ENCODE measurements at regions of chr10 and their contacts with region 1.

Region 1: DNA sequence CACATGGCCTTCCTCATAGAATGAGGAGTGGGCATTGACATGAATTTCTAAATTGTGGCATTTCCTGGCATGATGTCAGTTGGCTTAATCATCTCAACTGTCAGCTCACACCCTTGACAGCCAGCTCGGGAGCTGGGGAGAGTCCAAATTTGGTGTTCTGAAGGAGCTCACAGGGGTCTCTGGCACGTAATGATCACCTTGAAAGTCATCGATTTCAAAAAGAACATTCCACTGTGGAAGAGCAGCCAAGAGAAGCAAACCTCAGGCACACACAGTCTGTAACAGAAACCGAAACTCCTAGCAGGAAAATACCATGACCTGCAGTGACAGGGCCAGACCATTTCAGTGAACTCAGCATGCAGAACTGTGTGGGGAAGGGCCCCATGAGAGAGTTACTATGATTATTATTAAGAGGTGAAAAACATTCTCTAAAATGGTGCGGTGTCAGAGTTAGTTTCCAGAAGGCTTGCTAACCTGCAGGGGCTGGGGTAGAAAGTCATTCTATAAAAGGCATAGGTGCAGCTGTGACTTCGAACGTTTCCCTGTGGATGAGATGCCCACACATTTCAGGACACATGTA is 26.4 kb upstream of the KLF6 start:
- DNase-seq: peak; percentile 82
- H3K4me3 Mint-ChIP-seq: peak overlapping the region; percentile 59
- H3K27ac Mint-ChIP-seq: no peak overlapping the region
- H3K4me1 Mint-ChIP-seq: peaks cover 86% of the 10 kb centered on the region
- H3K27me3 Mint-ChIP-seq: no peaks in the 10 kb centered on the region

Region 2: DNA sequence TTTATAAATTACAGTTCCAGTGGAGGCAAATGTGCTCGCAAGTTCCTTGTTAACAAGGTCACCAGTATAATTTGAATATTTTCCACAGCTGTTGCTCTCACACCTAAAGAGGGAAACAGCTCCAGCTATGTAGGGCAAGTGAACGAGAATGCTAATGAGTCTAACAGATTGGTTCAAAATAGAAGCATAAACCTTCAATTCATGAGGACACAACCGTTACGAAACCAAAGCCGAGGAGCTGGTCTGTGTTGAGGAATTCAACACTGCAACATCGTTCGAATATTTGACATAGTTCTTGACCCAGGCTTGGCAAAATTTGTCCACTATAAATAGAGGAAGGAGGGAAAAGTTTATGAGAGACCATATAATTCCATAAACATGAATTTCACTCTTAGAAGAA is 187.6 kb before region 1 on chr10:
- CTCF ChIA-PET with region 1: no interaction called
- POLR2A ChIA-PET with region 1: no interaction called
- intact Hi-C with region 1: loop called (anchors 1 kb)
- DNase-seq: no peak
- H3K4me3 Mint-ChIP-seq: no peak overlapping the region
- H3K27ac Mint-ChIP-seq: peak overlapping the region; percentile 83
- H3K4me1 Mint-ChIP-seq: peaks cover 28% of the 10 kb centered on the region
- H3K27me3 Mint-ChIP-seq: no peaks in the 10 kb centered on the region

Region 3: DNA sequence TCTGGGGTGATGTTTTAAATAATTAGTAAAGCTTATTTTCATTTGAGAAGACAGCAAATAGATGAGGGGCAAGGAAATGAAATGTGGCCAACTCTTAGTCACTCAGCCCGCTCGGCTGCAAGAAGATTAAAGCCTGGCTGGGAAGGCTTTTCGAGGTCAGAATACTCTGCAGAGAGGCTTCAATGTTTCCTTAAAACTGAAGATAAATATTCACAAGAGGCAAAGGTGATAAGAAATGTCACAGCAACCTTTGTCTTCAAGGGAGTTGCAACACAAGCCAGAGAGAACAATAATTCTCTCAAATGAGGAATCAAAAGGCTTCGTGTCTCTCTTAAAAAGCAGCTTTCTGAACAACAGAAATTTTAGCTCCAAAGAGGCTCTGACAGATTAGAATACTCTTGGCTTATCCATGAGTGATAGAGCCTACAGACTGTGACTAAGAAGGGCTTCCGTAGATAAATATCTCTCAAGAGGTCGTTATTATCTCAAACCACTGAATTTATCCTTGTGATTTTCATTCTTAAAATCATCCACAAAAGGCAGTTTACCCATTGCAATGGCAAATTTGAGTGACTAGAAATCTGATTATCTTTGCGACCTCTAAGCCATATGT is 118.9 kb before region 1 on chr10:
- CTCF ChIA-PET with region 1: no interaction called
- POLR2A ChIA-PET with region 1: no interaction called
- intact Hi-C with region 1: no loop called
- DNase-seq: no peak
- H3K4me3 Mint-ChIP-seq: no peak overlapping the region
- H3K27ac Mint-ChIP-seq: no peak overlapping the region
- H3K4me1 Mint-ChIP-seq: peaks cover 16% of the 10 kb centered on the region
- H3K27me3 Mint-ChIP-seq: no peaks in the 10 kb centered on the region

Region 4: DNA sequence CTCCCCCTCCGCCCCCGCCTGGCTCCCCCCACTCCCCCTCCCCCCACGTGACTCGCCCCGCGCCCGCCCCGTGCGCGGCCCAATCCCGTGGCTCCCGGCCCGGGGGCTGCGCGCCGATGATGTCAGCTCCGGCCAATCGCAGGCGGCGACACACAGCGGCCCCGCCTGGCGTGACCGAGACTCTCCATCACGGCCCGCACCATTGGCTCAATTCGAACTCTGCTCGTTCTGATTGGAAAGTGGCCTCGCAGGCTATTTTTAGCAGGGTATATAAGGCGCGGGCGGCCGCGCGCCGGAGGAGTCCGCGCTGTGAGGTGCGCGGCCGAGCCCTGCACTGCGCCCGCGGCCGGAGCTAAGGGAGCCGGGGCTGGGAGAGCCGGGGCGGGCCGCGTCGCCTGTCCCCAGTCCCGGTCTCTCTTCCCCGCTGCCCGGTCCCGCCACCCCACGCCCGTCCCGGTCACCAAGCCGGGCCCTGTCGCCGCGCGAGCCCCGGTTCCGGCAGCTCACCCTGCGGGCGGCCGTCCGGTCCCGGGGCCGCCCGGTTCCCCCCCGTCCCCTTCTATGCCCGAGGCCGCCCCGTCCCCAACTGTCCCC is 26.0 kb before region 1 on chr10:
- CTCF ChIA-PET with region 1: interaction called, 5 read pairs
- POLR2A ChIA-PET with region 1: interaction called, 405 read pairs
- intact Hi-C with region 1: loop called (anchors 1 kb)
- DNase-seq: peak; percentile 100
- H3K4me3 Mint-ChIP-seq: peak overlapping the region; percentile 96
- H3K27ac Mint-ChIP-seq: peak overlapping the region; percentile 98
- H3K4me1 Mint-ChIP-seq: peaks cover 27% of the 10 kb centered on the region
- H3K27me3 Mint-ChIP-seq: peaks cover 2% of the 10 kb centered on the region

Region 5: GRCh38 chr10:3852147-3852904 is 40.9 kb after region 1 on chr10:
- CTCF ChIA-PET with region 1: interaction called, 8 read pairs
- POLR2A ChIA-PET with region 1: interaction called, 89 read pairs
- intact Hi-C with region 1: loop called (anchors 1 kb)
- DNase-seq: peak; percentile 86
- H3K4me3 Mint-ChIP-seq: peak overlapping the region; percentile 36
- H3K27ac Mint-ChIP-seq: peak overlapping the region; percentile 92
- H3K4me1 Mint-ChIP-seq: peaks cover 53% of the 10 kb centered on the region
- H3K27me3 Mint-ChIP-seq: no peaks in the 10 kb centered on the region

Region 6: GRCh38 chr10:3902054-3902808 is 90.8 kb after region 1 on chr10:
- CTCF ChIA-PET with region 1: interaction called, 4 read pairs
- POLR2A ChIA-PET with region 1: no interaction called
- intact Hi-C with region 1: loop called (anchors 1 kb)
- DNase-seq: peak; percentile 69
- H3K4me3 Mint-ChIP-seq: no peak overlapping the region
- H3K27ac Mint-ChIP-seq: peak overlapping the region; percentile 79
- H3K4me1 Mint-ChIP-seq: peaks cover 45% of the 10 kb centered on the region
- H3K27me3 Mint-ChIP-seq: no peaks in the 10 kb centered on the region

Region 7: DNA sequence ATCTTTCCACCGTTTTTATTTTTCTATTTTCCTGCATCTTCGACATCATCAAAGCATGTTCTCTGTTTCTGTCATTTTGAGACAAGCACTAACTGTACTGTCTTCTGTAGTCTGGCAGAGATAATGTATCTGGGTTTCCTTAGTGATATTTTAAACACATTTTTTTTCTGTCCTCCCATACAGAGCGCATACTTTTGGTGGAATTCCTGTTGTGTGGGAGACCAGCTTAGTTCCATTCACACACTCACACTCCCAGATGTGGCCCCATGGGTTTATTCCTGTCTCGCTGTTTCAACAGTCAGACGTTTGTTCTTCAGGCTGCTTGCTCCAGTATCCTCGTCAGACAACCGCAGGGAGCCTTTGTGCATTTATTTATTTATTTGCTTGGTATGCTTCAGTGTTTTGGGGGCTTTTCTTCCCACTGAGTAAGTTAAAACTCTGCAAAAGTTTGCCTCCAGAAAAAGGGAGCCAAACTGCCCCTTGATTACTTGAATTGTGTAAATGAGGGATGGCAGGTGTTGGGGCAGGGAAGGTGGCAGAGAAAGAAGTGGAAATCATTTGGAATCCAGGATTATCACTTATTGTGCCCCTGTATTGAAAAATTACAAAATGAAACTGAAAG is 430.5 kb after region 1 on chr10:
- CTCF ChIA-PET with region 1: interaction called, 3 read pairs
- POLR2A ChIA-PET with region 1: interaction called, 3 read pairs
- intact Hi-C with region 1: loop called (anchors 10 kb)
- DNase-seq: no peak
- H3K4me3 Mint-ChIP-seq: no peak overlapping the region
- H3K27ac Mint-ChIP-seq: no peak overlapping the region
- H3K4me1 Mint-ChIP-seq: peaks cover 32% of the 10 kb centered on the region
- H3K27me3 Mint-ChIP-seq: no peaks in the 10 kb centered on the region

Region 8: DNA sequence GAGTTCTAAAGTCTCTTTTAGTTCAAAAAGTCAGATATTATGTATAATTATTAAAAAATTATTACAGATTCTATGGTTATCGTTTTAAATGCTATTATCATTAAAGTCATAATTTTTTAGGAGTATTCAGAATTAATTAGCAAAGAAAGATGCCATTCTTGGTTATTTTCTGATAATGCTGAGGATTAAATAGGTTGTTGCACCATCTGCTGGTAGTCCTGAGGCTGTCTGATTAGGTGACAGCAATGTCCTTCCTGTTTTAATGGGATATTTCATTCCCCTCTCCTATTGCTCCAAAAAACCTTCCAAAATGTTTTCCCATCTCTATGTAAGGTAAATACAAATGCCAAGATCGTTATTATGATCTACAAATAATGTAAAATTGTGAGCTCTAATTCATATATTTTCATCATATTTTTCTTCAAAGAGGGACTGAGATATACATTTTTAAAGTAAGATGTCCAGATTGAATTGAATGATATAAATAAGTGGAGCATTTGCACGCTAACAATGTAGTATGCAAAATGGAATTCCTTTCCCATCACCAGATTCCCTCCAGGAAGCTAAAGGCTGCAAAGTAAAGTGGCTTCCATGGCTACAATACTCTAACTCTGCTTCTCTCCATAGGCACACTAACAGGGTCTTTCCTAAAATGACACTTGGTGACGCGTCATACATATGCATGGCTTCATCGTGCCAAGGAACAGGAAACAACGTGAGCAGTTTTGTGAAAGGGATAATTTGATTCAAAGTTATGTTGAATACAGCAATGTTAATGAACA is 955.8 kb after region 1 on chr10:
- CTCF ChIA-PET with region 1: no interaction called
- POLR2A ChIA-PET with region 1: no interaction called
- intact Hi-C with region 1: no loop called
- DNase-seq: no peak
- H3K4me3 Mint-ChIP-seq: no peak overlapping the region
- H3K27ac Mint-ChIP-seq: no peak overlapping the region
- H3K4me1 Mint-ChIP-seq: peaks cover 5% of the 10 kb centered on the region
- H3K27me3 Mint-ChIP-seq: peaks cover 20% of the 10 kb centered on the region

Measured in activated CD4-positive, alpha-beta memory T cell treated with anti-CD3 and anti-CD28 coated beads for 36 hours (primary cell).